ENCODE measurements at regions of chr10 and their contacts with region 1.

Region 1: GRCh38 chr10:72273410-72274212 is at the start of gene DDIT4:
- DNase-seq: peak; percentile 99
- ATAC-seq: peak; percentile 57 to 85
- H3K4me3 ChIP-seq: peak within 1 kb of the TSS; percentile 84
- H3K27ac ChIP-seq: peak within 1 kb of the TSS; percentile 98 to 100
- H3K4me1 ChIP-seq: peaks cover 52% of the 10 kb centered on the region
- CTCF ChIP-seq: no peak
- EP300 ChIP-seq: 0 out of 5 replicates have a peak, but pooled peaks of 1 of the 2 experiments have one; percentile 35
- POLR2A ChIP-seq: peak; percentile 100
- RAD21 ChIP-seq: peak in 1 of 2 experiments; percentile 8; a peak in 3 of 5 replicates
- polyA plus RNA-seq, gene DDIT4: 329 and 392 TPM in 2 replicates

Region 2: DNA sequence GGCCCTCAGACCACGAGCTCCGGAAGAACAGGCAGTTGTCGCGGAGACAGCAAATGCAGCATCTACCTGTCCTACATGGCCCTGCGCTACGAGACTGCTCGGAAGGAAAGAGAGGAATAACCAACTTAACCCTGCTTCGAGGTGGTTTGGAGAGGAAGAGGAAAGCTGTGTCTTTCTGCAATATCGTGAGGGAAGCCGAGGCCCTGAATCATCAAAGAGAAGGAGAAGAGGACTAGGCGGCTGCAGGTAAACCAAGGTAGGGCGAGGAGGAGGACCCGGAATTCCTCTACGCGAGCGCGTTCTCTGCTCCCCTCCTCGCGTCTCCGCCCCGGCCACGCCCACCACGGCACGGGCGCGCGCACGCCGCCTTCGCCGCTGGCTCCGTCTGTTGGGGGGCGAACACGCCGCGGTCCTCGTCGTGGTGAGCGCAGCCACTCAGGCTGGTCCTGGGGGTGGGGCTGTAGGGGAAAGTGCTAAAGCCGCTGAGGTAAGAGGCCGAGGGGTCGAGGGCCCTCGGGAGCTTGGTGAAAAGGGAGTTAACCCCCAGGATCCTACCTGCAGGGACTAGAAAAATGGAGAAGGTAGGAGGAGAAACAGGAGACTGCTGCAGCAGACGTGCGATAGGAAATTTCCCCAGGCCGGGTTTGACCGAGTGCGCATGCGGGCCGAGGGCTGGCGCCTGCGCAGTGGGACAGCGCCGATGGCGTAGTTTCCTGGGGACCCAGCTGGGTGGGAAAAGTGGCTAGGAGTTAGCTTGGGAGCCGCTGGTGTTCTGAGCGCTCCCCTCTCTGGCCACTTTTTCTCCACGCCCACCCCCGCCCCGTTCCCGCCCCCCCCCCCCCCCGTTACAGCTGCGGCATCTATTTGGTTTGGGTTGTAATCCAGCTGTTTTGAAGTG is 57.7 kb before region 1 on chr10 and contains the starts of genes ANAPC16 and ASCC1:
- CTCF ChIA-PET with region 1: interaction called, 30 read pairs
- POLR2A ChIA-PET with region 1: interaction called, 34 read pairs
- DNase-seq: peak; percentile 86 to 95
- ATAC-seq: peak; percentile 93 to 97
- H3K4me3 ChIP-seq: peak within 1 kb of the TSS; percentile 61
- H3K27ac ChIP-seq: peak within 1 kb of the TSS; percentile 89 to 95
- H3K4me1 ChIP-seq: peaks cover 54% of the 10 kb centered on the region
- CTCF ChIP-seq: no peak
- EP300 ChIP-seq: no peak
- POLR2A ChIP-seq: peak; percentile 87
- RAD21 ChIP-seq: 0 out of 5 replicates have a peak, but pooled peaks of 1 of the 2 experiments have one; percentile 19
- polyA plus RNA-seq, gene ANAPC16: 136 and 165 TPM in 2 replicates
- polyA plus RNA-seq, gene ASCC1: 82.3 and 83.7 TPM in 2 replicates

Region 3: GRCh38 chr10:72242675-72243074 is 30.9 kb before region 1 on chr10:
- CTCF ChIA-PET with region 1: interaction called, 11 read pairs
- POLR2A ChIA-PET with region 1: interaction called, 24 read pairs
- DNase-seq: no peak
- ATAC-seq: no peak
- H3K4me3 ChIP-seq: no peak overlapping the region
- H3K27ac ChIP-seq: peak overlapping the region; percentile 99 to 100
- H3K4me1 ChIP-seq: peaks cover 59% of the 10 kb centered on the region
- CTCF ChIP-seq: no peak
- EP300 ChIP-seq: no peak
- POLR2A ChIP-seq: no peak
- RAD21 ChIP-seq: no peak

Region 4: DNA sequence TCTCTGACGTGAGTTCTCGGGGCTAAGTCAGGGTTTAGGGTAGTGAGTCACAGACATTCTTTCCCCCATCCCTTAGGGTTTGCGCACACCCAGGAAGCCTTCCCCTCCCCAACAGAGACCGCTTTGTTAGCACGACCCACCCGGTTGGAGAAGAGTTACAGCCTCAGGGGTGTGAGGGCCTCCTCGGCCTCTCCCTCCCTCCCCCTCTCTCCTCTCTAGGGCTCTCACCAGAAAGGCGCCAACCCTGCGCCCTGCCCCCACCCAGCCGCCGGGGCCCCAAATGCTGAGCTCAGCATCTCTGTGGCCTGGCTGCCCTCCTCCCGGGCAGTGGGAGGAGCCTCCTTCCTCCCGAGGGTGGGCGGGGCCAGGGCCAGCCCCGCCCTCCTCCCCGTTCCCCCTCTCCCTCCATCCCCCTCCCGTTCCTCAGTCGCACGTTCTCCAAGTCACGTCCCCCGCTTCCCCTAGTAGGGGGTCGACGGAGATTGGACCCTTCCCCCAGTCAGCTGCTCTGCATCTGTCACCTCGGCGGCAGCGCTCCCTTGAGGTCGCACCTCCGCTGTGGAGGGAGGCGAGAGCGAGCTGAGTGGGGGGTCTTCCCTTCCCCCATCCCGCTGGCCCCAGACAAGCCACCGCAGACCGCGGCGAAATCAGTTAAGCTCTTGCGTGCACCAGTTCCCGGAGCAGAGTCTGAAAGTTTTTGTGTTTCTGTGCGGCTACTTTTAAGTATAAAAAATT is 12.9 kb before region 1 on chr10:
- CTCF ChIA-PET with region 1: interaction called, 29 read pairs
- POLR2A ChIA-PET with region 1: interaction called, 155 read pairs
- DNase-seq: peak; percentile 91 to 99
- ATAC-seq: peak; percentile 90 to 91
- H3K4me3 ChIP-seq: peak overlapping the region; percentile 41
- H3K27ac ChIP-seq: peak overlapping the region; percentile 99 to 100
- H3K4me1 ChIP-seq: peaks cover 83% of the 10 kb centered on the region
- CTCF ChIP-seq: no peak
- EP300 ChIP-seq: peak; percentile 95 to 97; a peak in 4 of 5 replicates
- POLR2A ChIP-seq: peak; percentile 32
- RAD21 ChIP-seq: peak; percentile 42 to 61

Region 5: GRCh38 chr10:72297968-72298773 is 24.6 kb after region 1 on chr10:
- CTCF ChIA-PET with region 1: interaction called, 46 read pairs
- POLR2A ChIA-PET with region 1: interaction called, 126 read pairs
- DNase-seq: peak; percentile 89 to 99
- ATAC-seq: peak; percentile 91 to 93
- H3K4me3 ChIP-seq: peak overlapping the region; percentile 55
- H3K27ac ChIP-seq: peak overlapping the region; percentile 98 to 100
- H3K4me1 ChIP-seq: peaks cover 41% of the 10 kb centered on the region
- CTCF ChIP-seq: no peak
- EP300 ChIP-seq: no peak
- POLR2A ChIP-seq: peak; percentile 36
- RAD21 ChIP-seq: peak in 1 of 2 experiments; percentile 21; a peak in 1 of 5 replicates

Region 6: DNA sequence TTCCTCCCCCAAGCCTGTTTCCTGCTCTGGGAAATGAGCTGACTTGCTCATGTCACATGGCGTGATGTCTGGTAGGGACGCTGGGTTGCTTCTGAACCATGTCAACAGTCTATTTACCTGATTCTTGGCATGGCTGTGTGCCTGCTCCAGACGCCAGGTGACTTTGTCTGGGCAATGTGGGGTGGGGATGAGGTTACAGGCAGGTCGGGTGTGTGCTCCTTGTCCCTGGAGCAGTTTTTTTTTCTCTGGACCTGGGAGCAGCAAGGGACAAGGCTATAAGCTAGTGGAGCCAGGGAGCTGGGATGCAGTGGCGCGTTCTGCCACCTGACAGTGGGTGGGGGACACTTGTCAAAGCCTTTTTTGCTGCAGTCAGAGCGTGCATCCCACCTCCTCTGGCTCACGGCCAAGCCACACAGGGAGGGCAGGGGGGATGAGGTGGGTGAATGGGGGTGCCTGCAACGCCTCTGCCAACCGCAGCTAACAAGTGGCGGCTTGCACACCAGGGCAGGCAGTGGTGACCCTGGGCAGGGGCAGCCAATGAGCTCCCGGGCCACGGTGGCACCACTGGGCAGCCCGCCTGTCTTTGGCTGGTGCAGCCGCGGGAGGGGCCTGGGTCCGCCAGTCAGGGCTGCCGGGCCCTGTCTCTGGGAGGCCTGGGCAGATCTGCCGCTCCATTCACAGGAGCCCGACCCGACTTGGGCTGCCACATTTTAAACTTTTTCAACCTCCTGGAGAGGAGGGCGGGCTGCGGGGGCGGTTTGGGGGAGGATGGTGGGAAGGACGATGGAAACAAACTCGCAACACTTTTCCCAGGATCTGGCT is 58.2 kb after region 1 on chr10:
- CTCF ChIA-PET with region 1: interaction called, 89 read pairs
- POLR2A ChIA-PET with region 1: interaction called, 19 read pairs
- DNase-seq: peak in 1 of 2 experiments; percentile 64
- ATAC-seq: peak in 1 of 2 experiments; percentile 34; a peak in 3 of 6 replicates
- H3K4me3 ChIP-seq: no peak overlapping the region
- H3K27ac ChIP-seq: peak overlapping the region; percentile 58 to 77
- H3K4me1 ChIP-seq: peaks cover 76% of the 10 kb centered on the region
- CTCF ChIP-seq: no peak
- EP300 ChIP-seq: no peak
- POLR2A ChIP-seq: no peak
- RAD21 ChIP-seq: no peak

Measured in A549 (cell line).